ENCODE measurements at regions of chr13 and their contacts with region 1.

Region 1: DNA sequence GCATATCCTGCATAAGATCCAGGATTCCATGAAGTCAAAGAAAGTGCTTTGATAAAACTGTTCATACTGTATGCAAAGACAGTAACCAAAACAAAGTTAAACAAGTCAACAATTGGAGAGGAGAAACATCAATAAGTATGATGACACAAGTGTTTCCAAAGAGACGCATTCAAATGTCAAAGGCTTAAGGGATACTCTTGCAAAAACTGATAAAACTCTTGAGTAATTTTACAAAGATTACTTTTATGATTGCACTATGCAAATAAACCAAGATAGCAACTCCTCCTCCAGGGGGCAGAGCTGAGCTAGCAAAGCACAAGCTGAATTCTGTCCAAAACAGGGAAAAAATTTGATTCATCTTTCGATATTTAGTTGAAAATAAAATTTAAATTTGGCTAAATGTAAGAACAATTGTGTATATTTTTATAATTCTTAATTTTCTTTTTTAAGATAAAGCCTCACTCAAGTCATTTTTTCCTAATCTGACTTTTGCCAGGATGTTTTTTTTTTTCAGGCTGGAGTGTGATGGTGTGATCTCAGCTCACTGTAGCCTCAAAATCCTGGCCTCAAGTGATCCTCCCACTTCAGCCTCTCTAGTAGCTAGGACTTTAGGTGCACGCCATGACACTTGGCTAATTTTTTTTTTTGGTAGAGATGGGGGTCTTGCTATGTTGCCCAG is 84.0 kb downstream of the MZT1 start:
- DNase-seq: peak; percentile 4 to 47
- ATAC-seq: peak in 1 of 2 experiments; percentile 62; a peak in 3 of 6 replicates
- H3K4me3 ChIP-seq: no peak overlapping the region
- H3K27ac ChIP-seq: no peak overlapping the region
- H3K4me1 ChIP-seq: no peaks in the 10 kb centered on the region
- CTCF ChIP-seq: peak; percentile 51
- EP300 ChIP-seq: no peak
- POLR2A ChIP-seq: no peak
- RAD21 ChIP-seq: peak in 1 of 2 experiments; percentile 38; a peak in 1 of 5 replicates

Region 2: GRCh38 chr13:72074663-72075062 is 568.8 kb before region 1 on chr13:
- CTCF ChIA-PET with region 1: no interaction called
- POLR2A ChIA-PET with region 1: no interaction called
- DNase-seq: no peak
- ATAC-seq: no peak
- H3K4me3 ChIP-seq: no peak overlapping the region
- H3K27ac ChIP-seq: no peak overlapping the region
- H3K4me1 ChIP-seq: no peaks in the 10 kb centered on the region
- CTCF ChIP-seq: no peak
- EP300 ChIP-seq: no peak
- POLR2A ChIP-seq: no peak
- RAD21 ChIP-seq: no peak

Region 3: DNA sequence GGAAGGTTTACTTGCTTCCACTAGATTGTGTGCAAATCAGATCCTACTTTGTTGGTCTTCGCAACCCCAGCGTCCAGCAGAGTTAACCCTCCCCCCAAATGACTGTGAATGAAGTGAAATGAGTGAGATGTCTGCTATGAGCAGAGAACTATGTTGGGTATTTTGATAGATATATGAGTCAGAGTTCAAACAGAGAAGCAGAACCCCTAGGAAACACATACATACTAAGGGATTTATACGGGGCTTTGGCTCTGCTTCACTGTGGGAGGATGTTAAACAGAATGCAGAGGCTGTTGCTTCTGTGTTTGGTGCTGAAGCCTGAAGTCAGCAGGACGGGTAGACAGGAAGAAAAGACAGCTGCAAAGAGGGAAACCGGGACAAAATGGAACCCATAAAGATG is 113.0 kb before region 1 on chr13:
- CTCF ChIA-PET with region 1: no interaction called
- POLR2A ChIA-PET with region 1: no interaction called
- DNase-seq: no peak
- ATAC-seq: peak in 1 of 2 experiments; percentile 42; a peak in 1 of 6 replicates
- H3K4me3 ChIP-seq: no peak overlapping the region
- H3K27ac ChIP-seq: no peak overlapping the region
- H3K4me1 ChIP-seq: no peaks in the 10 kb centered on the region
- CTCF ChIP-seq: no peak
- EP300 ChIP-seq: no peak
- POLR2A ChIP-seq: no peak
- RAD21 ChIP-seq: no peak

Region 4: GRCh38 chr13:72657379-72657778 is 13.9 kb after region 1 on chr13:
- CTCF ChIA-PET with region 1: no interaction called
- POLR2A ChIA-PET with region 1: no interaction called
- DNase-seq: no peak
- ATAC-seq: no peak
- H3K4me3 ChIP-seq: no peak overlapping the region
- H3K27ac ChIP-seq: no peak overlapping the region
- H3K4me1 ChIP-seq: no peaks in the 10 kb centered on the region
- CTCF ChIP-seq: no peak
- EP300 ChIP-seq: no peak
- POLR2A ChIP-seq: no peak
- RAD21 ChIP-seq: no peak

Region 5: GRCh38 chr13:72696579-72696978 is 53.1 kb after region 1 on chr13:
- CTCF ChIA-PET with region 1: interaction called, 10 read pairs
- POLR2A ChIA-PET with region 1: no interaction called
- DNase-seq: peak in 1 of 2 experiments; percentile 1
- ATAC-seq: no peak
- H3K4me3 ChIP-seq: no peak overlapping the region
- H3K27ac ChIP-seq: no peak overlapping the region
- H3K4me1 ChIP-seq: no peaks in the 10 kb centered on the region
- CTCF ChIP-seq: peak; percentile 43
- EP300 ChIP-seq: no peak
- POLR2A ChIP-seq: no peak
- RAD21 ChIP-seq: peak; percentile 47 to 66

Region 6: DNA sequence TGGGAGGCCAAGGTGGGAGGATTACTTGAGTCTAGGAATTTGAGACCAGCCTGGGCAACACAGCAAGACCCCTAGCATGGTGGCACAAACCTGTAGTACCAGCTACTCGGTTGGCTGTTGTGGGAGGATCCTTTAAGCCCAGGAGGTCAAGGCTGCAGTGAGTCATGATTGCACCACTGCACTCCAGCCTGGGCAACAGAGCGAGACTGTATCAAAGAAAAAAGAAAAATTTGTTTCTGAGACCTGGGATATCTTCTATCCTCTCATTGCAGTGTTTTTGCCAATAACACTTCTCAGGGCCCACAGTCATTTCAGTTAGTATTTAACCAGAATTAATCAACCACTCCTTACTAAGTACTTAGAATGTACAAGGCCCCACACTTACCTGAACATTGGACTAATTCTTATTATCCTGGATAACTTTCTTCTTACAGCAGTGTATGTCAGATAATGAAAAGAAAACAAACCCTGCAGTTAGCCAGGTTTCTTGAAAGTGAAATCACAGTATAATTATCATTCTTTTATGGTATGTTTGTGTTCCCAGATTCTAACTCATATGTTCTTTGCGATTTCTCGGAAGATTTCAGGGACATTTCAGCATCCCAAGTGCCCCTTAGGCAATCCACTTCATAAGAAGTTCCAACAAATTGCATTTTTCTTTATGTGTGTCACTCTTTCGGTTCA is 339.8 kb after region 1 on chr13:
- CTCF ChIA-PET with region 1: no interaction called
- POLR2A ChIA-PET with region 1: no interaction called
- DNase-seq: no peak
- ATAC-seq: peak in 1 of 2 experiments; percentile 65; a peak in 2 of 6 replicates
- H3K4me3 ChIP-seq: no peak overlapping the region
- H3K27ac ChIP-seq: peak overlapping the region; percentile 19 to 53; a peak in 3 of 6 replicates
- H3K4me1 ChIP-seq: peaks cover 13% of the 10 kb centered on the region
- CTCF ChIP-seq: no peak
- EP300 ChIP-seq: no peak
- POLR2A ChIP-seq: no peak
- RAD21 ChIP-seq: no peak